Left ventricle myocardium superior (tissue), 1 donor: ENCODE measurements at regions of chr3 and their contacts with region 1.

Region 1: DNA sequence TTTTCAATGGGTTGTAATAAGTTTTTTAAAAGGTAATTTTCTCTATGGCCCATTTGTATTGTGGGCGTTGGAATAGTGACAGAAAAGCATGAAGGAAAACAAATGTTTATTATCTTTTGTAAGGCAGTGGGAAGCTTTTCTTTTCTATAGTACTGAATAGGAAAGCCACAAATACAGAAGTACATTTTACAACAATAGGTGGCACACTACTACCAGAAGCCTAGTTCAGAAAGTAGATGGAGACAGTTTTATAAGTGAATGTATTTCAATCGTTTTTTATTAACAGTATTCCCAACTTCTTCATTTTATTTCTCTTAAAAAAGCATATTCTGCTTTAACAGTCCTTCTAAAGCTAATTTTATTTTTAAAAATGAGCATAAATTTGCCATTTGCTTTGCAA is 296.7 kb downstream of the PTPRG start:
- DNase-seq: no peak
- ATAC-seq: peak; percentile 47

Region 2: DNA sequence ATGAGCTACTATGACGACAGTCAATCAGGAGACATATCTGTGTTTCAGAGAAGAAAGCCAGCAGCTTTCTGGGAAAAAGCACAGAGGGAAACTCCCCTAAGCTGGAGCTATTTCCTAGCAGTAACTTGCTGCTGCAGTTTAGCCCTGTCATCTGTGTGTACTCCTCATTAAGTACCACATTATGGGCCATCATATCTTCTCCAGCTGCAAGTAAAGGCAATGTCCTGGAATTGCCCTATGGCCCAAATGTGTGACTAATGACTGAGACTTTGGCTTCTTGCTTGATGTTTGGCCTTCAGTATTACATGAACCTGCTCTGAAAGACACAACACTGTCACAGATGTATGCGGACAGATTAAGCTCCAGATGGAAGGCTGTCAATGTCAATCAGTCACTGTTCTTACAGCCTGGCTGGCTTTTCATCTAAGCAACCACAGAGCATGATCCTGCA is 797.6 kb before region 1 on chr3:
- intact Hi-C with region 1: no loop called
- DNase-seq: no peak
- ATAC-seq: no peak

Region 3: DNA sequence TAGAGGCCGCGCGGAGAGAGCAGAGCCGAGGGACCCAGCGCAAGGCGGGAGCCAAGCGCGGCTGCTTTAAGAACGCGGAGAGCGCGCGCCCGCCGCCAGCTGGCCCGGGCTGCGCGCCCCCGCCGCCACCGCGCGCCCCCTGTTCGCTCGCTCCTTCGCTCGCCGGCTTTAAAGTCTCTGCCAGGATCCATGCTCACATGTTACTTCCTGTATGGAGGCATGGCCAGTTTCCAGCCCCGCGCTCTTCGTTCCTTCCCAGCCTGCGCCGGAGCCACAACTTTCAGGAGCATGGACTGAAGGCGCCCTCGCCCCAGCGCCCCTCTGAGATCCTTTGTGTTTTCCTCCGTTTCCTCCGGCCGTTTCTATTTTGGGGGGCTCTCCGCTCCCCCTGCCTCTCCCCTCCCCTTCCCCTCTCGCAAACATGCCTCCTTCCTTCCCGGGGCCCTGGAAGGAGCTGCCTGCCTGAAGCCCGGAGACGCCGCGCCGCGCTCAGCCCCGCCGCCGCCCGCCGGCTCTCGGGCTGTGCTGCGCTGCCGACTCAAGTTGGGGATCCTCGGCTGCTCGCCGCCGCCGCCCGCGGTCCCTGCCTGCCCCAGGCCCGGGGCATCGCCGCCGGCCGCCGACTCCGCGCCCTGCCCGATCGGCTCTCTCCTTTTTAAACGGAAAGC is 296.5 kb before region 1 on chr3 and contains the start of gene PTPRG:
- intact Hi-C with region 1: loop called (anchors 10 kb)
- DNase-seq: peak; percentile 94
- ATAC-seq: peak; percentile 80
- total RNA-seq, gene PTPRG: 30.4 TPM

Region 4: GRCh38 chr3:62131592-62131991 is 273.5 kb after region 1 on chr3:
- intact Hi-C with region 1: loop called (anchors 5 kb)
- DNase-seq: no peak
- ATAC-seq: no peak

Region 5: GRCh38 chr3:62188681-62189383 is 330.8 kb after region 1 on chr3:
- intact Hi-C with region 1: loop called (anchors 5 kb)
- DNase-seq: peak; percentile 81
- ATAC-seq: peak; percentile 72